ENCODE measurements at regions of chr19 and their contacts with region 1.

Region 1: DNA sequence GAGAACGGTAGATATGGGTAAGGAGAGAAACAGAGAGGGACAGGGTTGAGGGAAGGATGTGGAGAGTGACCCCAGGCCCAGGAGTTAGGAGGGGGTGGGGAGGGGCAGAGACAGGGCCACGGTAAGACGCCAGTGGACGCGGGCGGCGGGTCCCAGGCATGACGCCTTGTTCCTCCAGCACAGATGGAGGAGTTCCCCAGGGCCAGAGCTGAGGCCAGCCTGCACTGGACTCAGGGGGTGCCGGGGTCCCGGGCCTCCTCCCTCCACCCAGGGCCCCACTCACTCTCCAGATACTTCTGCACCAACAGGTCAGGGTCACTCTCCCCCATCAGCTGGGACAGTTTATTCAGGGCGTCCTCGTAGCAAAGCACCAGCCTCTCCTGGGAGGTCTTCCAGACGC is 22.0 kb upstream of the EMP3 start:
- DNase-seq: no peak
- ATAC-seq: no peak
- H3K4me3 ChIP-seq: no peak overlapping the region
- H3K27ac ChIP-seq: no peak overlapping the region
- H3K4me1 ChIP-seq: peaks cover 0 to 12% of the 10 kb centered on the region in 2 experiments; a peak in 1 of 5 replicates
- H3K27me3 ChIP-seq: peaks cover 12 to 27% of the 10 kb centered on the region in 2 experiments; a peak in 4 of 5 replicates
- CTCF ChIP-seq: no peak
- EP300 ChIP-seq: no peak
- POLR2A ChIP-seq: no peak
- RAD21 ChIP-seq: no peak

Region 2: GRCh38 chr19:48333467-48334384 is 30.4 kb after region 1 on chr19:
- CTCF ChIA-PET with region 1: no interaction called
- POLR2A ChIA-PET with region 1: no interaction called
- in situ Hi-C with region 1: no loop called
- intact Hi-C with region 1: no loop called
- DNase-seq: peak; percentile 92 to 97 (median 94)
- ATAC-seq: peak; percentile 89
- H3K4me3 ChIP-seq: peak overlapping the region; percentile 50
- H3K27ac ChIP-seq: peak overlapping the region; percentile 91
- H3K4me1 ChIP-seq: peaks cover 21 to 61% of the 10 kb centered on the region in 2 experiments
- H3K27me3 ChIP-seq: no peaks in the 10 kb centered on the region
- CTCF ChIP-seq: peak; percentile 78 to 99 (median 98)
- EP300 ChIP-seq: no peak
- POLR2A ChIP-seq: peak; percentile 70
- RAD21 ChIP-seq: peak; percentile 98 to 99

Region 3: GRCh38 chr19:48351341-48351752 is 48.0 kb after region 1 on chr19:
- CTCF ChIA-PET with region 1: no interaction called
- POLR2A ChIA-PET with region 1: no interaction called
- in situ Hi-C with region 1: loop called (anchors 5 kb)
- intact Hi-C with region 1: no loop called
- DNase-seq: peak; percentile 81 to 88 (median 85)
- ATAC-seq: peak; percentile 98
- H3K4me3 ChIP-seq: no peak overlapping the region
- H3K27ac ChIP-seq: no peak overlapping the region
- H3K4me1 ChIP-seq: peaks cover 9 to 13% of the 10 kb centered on the region in 2 experiments; a peak in 4 of 5 replicates
- H3K27me3 ChIP-seq: no peaks in the 10 kb centered on the region
- CTCF ChIP-seq: peak; percentile 86 to 94 (median 91)
- EP300 ChIP-seq: no peak
- POLR2A ChIP-seq: no peak
- RAD21 ChIP-seq: peak; percentile 38 to 68

Measured in K562 (cell line).